ENCODE measurements at regions of chr17 and their contacts with region 1.

Region 1: DNA sequence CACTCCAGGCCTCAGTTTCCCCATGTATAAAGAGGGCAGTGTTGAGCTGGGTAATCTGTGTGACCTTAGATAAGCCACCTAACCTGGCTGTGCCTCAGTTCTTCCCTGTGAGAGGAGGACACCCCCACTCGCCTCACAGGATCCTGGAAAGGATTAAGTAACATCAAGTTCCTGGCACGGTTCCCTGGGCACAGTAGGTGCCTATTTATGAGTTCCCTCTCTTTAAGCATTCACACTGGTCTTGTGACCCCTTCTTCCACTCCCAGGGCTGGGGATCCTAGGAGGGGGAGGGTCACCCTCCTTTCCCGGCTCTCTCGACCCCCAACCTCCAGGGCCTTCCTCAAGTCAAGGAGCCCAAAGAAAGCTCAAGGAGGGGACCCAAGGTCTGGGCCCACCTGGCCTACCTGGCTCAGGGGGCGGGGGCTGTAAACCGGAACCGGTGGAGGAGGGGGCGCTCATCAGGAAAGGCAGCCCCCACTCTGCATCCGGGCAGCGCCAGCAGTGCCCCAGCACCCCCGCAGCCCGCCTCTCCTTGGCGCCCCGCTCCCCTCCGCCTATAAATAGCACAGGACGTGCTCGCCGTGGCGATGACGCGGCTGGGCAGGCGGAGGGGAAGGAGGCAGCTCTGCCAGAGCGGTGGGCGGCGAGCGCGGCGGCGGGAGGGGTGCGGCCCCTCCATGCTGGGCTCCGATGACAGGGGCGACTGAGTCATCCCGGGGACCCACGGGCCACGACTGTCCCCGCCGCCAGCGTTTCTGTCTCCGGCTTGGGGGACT is 9.4 kb downstream of the RPL19 start:
- DNase-seq: no peak
- H3K4me3 ChIP-seq: no peak overlapping the region
- H3K27ac ChIP-seq: no peak overlapping the region
- H3K4me1 ChIP-seq: peaks cover 22% of the 10 kb centered on the region
- H3K27me3 ChIP-seq: no peaks in the 10 kb centered on the region
- CTCF ChIP-seq: no peak

Region 2: GRCh38 chr17:39191750-39192510 is 17.6 kb before region 1 on chr17:
- CTCF ChIA-PET with region 1: interaction called, 10 read pairs
- dilution Hi-C with region 1: no loop called
- in situ Hi-C with region 1: no loop called
- intact Hi-C with region 1: no loop called
- DNase-seq: no peak
- H3K4me3 ChIP-seq: no peak overlapping the region
- H3K27ac ChIP-seq: no peak overlapping the region
- H3K4me1 ChIP-seq: peaks cover 15% of the 10 kb centered on the region
- H3K27me3 ChIP-seq: no peaks in the 10 kb centered on the region
- CTCF ChIP-seq: no peak

Region 3: DNA sequence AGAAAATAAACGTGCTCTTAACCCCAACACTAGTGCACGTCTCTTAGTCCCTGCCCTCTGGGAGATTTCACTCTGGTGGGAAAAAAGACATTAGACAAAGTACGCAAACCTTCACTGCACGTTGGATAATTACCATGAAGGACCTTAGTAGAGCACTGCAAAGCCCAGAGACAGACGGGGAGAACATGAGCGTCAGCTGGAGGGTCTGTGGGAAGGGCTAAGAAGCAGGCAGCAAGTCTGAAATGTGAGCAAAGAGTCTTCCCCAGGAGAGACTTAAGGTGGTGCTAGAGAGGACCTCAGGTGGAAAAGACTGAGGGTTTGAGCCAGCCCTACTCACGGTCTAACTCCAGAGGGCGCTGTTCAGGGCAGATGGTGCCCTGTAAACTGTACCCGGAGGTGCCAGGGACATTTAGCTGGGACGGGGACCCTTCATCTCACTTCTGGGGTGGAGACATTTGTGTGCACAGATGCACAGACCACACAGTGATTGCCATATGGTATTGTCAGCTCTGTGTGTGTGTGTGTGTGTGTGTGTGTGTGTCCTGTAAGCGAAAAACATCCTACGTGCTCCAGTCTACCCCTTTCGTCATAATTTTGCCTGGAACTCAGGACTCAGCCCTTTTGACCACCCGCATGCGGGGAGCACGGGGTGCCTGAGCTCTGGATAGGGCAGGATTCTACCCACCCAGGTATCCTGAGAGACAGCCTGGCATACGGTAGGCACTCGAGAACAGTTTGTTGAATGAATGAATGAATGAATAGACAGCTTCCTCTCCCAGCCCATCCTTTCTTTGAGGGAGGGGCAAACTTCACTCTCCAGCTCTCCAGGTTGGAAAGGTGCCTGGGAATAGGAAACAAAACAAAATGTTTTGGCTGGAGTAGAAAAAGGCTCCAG is 26.3 kb after region 1 on chr17:
- CTCF ChIA-PET with region 1: interaction called, 6 read pairs
- dilution Hi-C with region 1: no loop called
- in situ Hi-C with region 1: loop called in 1 of 2 experiments (anchors 5 kb)
- intact Hi-C with region 1: loop called (anchors 1 kb)
- DNase-seq: peak; percentile 46
- H3K4me3 ChIP-seq: no peak overlapping the region
- H3K27ac ChIP-seq: no peak overlapping the region
- H3K4me1 ChIP-seq: peaks cover 11% of the 10 kb centered on the region
- H3K27me3 ChIP-seq: no peaks in the 10 kb centered on the region
- CTCF ChIP-seq: peak; percentile 82 to 89

Region 4: DNA sequence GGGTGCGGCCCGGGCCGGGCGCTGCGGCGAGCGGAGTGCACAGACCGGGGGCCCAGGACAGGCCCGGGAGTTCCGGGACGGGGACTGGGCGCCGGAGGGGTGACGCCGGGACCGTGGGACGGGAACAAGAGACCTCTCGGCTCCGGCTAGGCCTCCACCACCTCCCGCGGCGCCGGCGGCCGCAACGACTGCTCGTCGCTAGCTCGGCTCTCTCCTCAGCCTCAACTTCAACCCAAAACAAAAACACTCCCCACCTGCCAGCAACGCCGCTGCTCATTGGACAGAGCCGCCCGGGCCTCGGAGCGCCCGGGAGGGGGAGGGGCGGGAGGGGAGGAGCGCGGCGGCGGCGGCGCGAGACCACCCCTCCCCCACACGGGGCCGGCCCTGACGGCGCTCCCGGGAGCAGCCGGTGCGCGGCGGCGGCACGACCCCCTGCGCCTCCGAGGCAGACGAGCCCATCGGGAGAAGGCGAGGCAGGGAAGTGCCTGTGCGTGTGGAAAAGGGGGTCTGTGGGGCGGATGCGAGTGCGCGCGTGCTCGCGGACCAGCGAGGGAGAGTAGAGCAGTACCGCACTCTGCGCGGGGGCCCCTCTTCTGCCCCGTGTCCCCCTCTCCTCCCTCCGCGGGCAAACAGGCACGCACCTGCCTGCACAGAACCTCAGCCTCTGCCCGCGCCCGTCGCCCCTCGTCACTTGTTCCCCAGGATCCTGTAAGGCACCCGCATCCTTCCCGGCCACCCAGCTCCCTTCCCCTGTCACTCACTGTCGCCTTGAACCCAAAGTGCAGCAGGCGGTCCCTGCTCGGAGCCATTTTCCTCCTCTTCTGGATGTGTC is 192.1 kb after region 1 on chr17 and contains the start of gene FBXL20:
- CTCF ChIA-PET with region 1: no interaction called
- dilution Hi-C with region 1: no loop called
- in situ Hi-C with region 1: no loop called
- intact Hi-C with region 1: loop called (anchors 5 kb)
- DNase-seq: peak; percentile 89
- H3K4me3 ChIP-seq: peak within 1 kb of the TSS; percentile 95 to 100 (median 97)
- H3K27ac ChIP-seq: peak within 1 kb of the TSS; percentile 59
- H3K4me1 ChIP-seq: peaks cover 21% of the 10 kb centered on the region
- H3K27me3 ChIP-seq: no peaks in the 10 kb centered on the region
- CTCF ChIP-seq: no peak
- total RNA-seq, gene FBXL20: 13.0 to 17.0 TPM

Region 5: DNA sequence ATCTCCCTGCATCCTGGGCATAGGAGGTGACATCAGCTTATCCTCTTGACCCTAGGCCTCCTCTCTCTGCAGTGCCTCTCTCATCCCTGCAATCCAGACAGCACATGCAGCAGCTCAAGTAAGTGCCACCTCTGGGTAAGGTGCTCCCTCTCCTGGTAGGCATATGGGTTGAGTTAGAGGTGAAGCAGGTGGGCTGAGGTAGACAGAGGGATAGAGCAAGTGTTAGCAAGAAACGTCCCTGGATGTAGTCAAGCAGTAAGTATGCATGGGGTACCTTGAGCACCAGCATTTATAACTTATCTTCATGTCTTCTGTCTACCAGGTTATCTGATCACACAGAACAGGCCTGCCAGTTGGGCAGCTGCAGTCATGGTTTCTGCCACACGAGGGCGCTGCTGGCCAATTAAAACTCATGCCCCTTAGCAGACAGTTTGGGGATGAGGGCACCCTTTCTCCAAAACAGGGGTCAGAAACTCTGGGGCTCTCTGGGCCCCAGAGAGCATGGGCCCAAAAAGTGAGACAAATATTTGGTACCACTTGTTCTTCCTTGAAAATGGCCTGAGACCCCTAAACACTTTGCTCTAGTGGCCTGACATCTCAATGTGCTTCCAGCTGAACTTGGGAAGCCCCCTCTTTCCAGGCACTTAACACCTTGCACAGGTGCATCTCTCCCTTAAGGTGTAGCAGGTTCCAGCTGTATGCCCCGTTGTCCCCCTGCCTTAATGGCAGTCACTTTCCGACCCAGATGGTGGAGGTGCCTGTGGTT is 338.4 kb after region 1 on chr17:
- CTCF ChIA-PET with region 1: no interaction called
- dilution Hi-C with region 1: no loop called
- in situ Hi-C with region 1: no loop called
- intact Hi-C with region 1: loop called (anchors 1 kb)
- DNase-seq: peak; percentile 34
- H3K4me3 ChIP-seq: no peak overlapping the region
- H3K27ac ChIP-seq: no peak overlapping the region
- H3K4me1 ChIP-seq: no peaks in the 10 kb centered on the region
- H3K27me3 ChIP-seq: no peaks in the 10 kb centered on the region
- CTCF ChIP-seq: peak; percentile 89 to 96